ENCODE measurements at regions of chr1 and their contacts with region 1.

Region 1: DNA sequence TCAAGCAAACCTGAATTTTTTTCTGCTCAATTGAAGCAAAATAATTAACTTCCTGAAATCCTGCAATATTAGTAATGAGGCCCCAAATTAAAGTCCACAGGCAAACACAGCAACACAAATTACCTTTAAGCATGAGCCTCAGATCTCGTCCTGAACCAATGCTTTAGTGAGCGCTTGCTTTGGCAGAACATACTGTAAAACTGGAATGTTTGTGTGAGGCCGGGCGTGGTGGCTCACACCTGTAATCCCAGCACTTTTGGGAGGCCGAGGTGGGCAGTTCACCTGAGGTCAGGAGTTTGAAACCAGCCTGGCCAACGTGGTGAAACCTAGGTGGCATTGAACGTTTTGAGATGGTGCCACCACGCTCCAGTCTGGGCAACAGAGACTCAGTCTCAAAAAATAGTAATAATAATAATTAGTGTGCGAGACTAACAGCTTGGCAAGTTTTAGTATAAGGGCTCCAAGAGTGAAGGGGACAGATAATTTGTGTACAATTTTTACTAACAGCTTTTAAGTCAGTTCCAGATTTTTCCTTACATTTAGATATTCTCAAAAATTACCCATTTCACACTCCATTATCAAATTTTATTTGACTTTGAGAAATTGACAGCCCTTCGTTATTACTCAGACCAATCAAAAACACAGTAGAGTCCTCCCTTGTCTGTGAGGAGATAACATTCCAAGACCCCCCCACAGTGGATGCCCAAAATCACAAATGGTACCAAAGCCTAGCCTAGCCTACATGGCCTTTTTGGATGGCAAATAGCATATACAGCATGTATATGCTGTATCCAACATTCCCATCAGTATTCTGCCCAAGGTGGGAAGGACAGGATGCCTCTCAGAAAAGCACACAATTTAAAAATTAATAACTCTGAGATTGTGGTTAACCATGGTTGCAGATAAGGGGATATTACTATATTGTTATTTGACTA is 17.6 kb downstream of the SFPQ start:
- DNase-seq: no peak
- ATAC-seq: no peak
- H3K4me3 ChIP-seq: no peak overlapping the region
- H3K4me3 Mint-ChIP-seq: no peak overlapping the region
- H3K27ac ChIP-seq: no peak overlapping the region
- H3K27ac Mint-ChIP-seq: no peak overlapping the region
- H3K4me1 ChIP-seq: peaks cover 17% of the 10 kb centered on the region
- H3K4me1 Mint-ChIP-seq: peaks cover 29% of the 10 kb centered on the region
- H3K27me3 ChIP-seq: no peaks in the 10 kb centered on the region
- H3K27me3 Mint-ChIP-seq: no peaks in the 10 kb centered on the region
- CTCF ChIP-seq: no peak

Region 2: GRCh38 chr1:35186239-35186638 is 10.9 kb after region 1 on chr1:
- CTCF ChIA-PET with region 1: no interaction called
- POLR2A ChIA-PET with region 1: interaction called, 12 read pairs
- intact Hi-C with region 1: loop called in 1 of 2 experiments (anchors 1 kb)
- DNase-seq: no peak
- ATAC-seq: no peak
- H3K4me3 ChIP-seq: no peak overlapping the region
- H3K4me3 Mint-ChIP-seq: no peak overlapping the region
- H3K27ac ChIP-seq: peak overlapping the region in 1 of 2 experiments; percentile 18
- H3K27ac Mint-ChIP-seq: peak overlapping the region; percentile 39
- H3K4me1 ChIP-seq: peaks cover 96% of the 10 kb centered on the region
- H3K4me1 Mint-ChIP-seq: peaks cover 93% of the 10 kb centered on the region
- H3K27me3 ChIP-seq: no peaks in the 10 kb centered on the region
- H3K27me3 Mint-ChIP-seq: no peaks in the 10 kb centered on the region
- CTCF ChIP-seq: no peak

Region 3: GRCh38 chr1:35408925-35409324 is 233.6 kb after region 1 on chr1:
- CTCF ChIA-PET with region 1: no interaction called
- POLR2A ChIA-PET with region 1: no interaction called
- intact Hi-C with region 1: no loop called
- DNase-seq: no peak
- ATAC-seq: no peak
- H3K4me3 ChIP-seq: no peak overlapping the region
- H3K4me3 Mint-ChIP-seq: no peak overlapping the region
- H3K27ac ChIP-seq: no peak overlapping the region
- H3K27ac Mint-ChIP-seq: no peak overlapping the region
- H3K4me1 ChIP-seq: no peaks in the 10 kb centered on the region
- H3K4me1 Mint-ChIP-seq: no peaks in the 10 kb centered on the region
- H3K27me3 ChIP-seq: no peaks in the 10 kb centered on the region
- H3K27me3 Mint-ChIP-seq: no peaks in the 10 kb centered on the region
- CTCF ChIP-seq: no peak